ENCODE measurements at regions of chr11 and their contacts with region 1.

Region 1: GRCh38 chr11:131064373-131064991 is 148.2 kb upstream of the SNX19 start:
- DNase-seq: peak; percentile 80
- H3K4me3 ChIP-seq: peak overlapping the region in 1 of 2 experiments; percentile 19; a peak in 1 of 4 replicates
- H3K27ac ChIP-seq: no peak overlapping the region
- H3K4me1 ChIP-seq: no peaks in the 10 kb centered on the region
- H3K27me3 ChIP-seq: no peaks in the 10 kb centered on the region
- CTCF ChIP-seq: peak; percentile 53
- EP300 ChIP-seq: no peak
- RAD21 ChIP-seq: peak; percentile 88

Region 2: DNA sequence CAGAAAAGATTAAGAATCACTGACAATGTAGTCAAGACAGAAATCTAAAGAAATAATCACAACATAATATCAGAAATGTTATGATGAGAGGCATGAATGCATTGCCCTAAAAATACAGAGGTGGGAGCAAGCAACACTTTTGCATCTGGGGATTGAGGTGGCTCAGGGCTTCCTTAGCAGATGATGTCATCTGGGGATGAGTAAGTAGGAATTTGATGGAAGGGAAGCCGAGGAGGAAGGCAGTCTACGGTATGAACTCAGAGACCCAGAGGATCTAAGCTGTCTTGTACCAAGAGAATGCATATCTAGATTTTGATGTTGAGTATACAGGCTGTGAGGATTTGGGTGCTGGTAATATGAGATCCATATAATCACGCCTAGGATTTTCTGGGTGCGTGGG is 44.8 kb after region 1 on chr11:
- CTCF ChIA-PET with region 1: no interaction called
- POLR2A ChIA-PET with region 1: no interaction called
- DNase-seq: no peak
- H3K4me3 ChIP-seq: no peak overlapping the region
- H3K27ac ChIP-seq: no peak overlapping the region
- H3K4me1 ChIP-seq: no peaks in the 10 kb centered on the region
- H3K27me3 ChIP-seq: no peaks in the 10 kb centered on the region
- CTCF ChIP-seq: no peak
- EP300 ChIP-seq: no peak
- RAD21 ChIP-seq: no peak

Region 3: DNA sequence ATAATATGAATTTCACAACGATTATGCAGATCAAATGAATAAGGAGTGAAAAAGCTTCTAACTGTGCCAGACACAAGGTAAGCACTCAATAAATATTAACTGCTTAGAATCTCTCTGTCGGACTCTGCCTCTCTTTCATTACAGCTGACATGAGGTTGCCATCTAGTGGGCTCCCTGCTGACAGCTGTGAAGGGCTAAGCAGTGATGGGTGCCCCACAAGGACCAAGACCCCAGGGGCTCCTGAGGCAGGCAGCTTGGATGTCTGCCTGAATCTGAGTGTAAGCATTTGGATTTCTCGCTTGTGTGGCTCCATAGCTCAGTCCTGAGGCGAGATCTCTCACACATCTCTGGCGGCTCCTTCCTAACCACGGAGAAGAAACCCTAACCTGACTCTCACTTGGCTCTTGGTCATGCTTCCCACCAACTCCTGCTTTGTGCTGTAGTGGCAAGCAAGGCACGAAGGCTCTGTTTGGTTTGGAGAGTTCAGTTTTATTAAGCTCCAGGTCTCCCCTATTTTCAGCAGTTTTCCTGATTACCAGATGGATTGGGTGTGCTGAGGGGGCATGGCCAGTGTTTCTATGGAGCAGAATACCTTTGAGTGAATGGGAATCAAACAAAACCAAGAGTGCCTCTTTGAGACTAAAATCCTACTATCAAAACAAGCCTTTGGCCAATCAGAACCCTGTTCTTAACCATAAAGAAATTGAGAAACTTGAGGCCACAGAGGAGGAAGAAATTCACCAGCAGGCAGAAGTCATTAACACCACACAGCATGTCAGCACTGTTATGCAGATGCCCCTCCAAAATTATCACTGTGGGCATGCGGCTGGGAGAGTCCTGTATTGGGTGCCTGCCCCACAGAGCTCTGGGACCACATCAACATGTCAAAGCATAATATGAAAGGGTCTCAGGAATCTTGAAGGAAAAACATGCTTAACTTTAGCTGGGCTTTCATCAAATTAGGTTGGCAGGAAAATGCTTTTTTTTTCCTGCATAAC is 153.1 kb after region 1 on chr11:
- CTCF ChIA-PET with region 1: interaction called, 19 read pairs
- POLR2A ChIA-PET with region 1: no interaction called
- DNase-seq: no peak
- H3K4me3 ChIP-seq: no peak overlapping the region
- H3K27ac ChIP-seq: no peak overlapping the region
- H3K4me1 ChIP-seq: no peaks in the 10 kb centered on the region
- H3K27me3 ChIP-seq: no peaks in the 10 kb centered on the region
- CTCF ChIP-seq: no peak
- EP300 ChIP-seq: no peak
- RAD21 ChIP-seq: peak; percentile 56

Region 4: DNA sequence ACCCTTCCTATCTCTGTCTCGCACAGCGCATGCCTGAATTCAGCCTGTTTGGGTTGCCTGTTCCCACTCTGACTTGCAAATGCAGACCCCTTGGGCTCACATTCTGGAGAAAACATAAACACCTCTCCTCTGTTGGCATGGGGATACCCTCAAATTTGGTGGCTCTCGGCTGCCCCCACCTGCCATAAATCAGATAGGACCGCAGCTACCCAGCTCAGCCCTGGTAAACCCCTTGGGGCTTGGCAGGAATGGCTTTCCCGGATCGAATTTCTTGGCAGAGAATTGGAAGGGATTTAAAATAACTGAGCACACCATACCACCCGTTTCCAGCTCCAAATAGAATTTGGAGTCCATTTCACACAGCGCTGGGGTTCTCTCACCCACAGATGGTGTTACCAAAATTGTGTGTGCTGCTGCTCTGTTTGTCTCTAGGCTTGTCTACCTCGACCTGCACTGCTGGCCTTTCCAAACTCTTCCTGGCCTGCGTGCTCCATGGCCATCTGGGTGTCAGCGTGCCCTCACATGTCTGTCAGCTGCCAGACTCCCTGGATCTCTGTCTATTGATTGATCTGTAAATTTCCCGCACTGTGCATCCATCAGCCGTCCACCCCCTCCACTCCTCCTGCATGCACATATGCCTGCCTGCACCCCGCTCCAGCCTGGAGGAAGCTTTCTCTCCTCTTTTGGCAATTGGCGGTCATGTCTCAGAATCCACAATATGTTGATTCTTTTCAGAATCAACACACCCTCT is 439.9 kb after region 1 on chr11:
- CTCF ChIA-PET with region 1: interaction called, 44 read pairs
- POLR2A ChIA-PET with region 1: no interaction called
- DNase-seq: peak; percentile 65
- H3K4me3 ChIP-seq: no peak overlapping the region
- H3K27ac ChIP-seq: no peak overlapping the region
- H3K4me1 ChIP-seq: no peaks in the 10 kb centered on the region; a peak in 1 of 4 replicates
- H3K27me3 ChIP-seq: no peaks in the 10 kb centered on the region
- CTCF ChIP-seq: no peak
- EP300 ChIP-seq: no peak
- RAD21 ChIP-seq: peak; percentile 30

Region 5: DNA sequence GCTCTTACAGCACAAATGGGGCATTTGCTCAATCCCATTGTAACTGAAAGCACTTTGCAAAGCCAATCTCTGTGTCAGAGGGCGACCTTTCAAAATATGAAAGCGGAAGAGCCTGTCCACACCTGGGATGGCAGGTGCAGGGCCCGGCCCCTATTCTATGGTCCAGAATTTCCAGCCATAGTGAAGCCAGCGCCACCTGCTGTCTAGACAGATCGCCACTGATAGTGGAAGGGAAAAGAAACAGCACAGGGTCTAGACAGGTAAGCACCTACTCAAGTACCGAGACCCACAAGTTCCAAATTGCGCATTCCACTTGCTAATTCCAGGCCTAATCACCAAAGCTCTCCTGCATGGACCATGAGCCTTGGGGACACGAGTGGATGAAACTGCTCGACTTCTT is 447.3 kb after region 1 on chr11:
- CTCF ChIA-PET with region 1: interaction called, 44 read pairs
- POLR2A ChIA-PET with region 1: no interaction called
- DNase-seq: peak; percentile 43
- H3K4me3 ChIP-seq: peak overlapping the region in 1 of 2 experiments; percentile 54; a peak in 1 of 4 replicates
- H3K27ac ChIP-seq: no peak overlapping the region
- H3K4me1 ChIP-seq: no peaks in the 10 kb centered on the region; a peak in 1 of 4 replicates
- H3K27me3 ChIP-seq: no peaks in the 10 kb centered on the region
- CTCF ChIP-seq: no peak
- EP300 ChIP-seq: no peak
- RAD21 ChIP-seq: peak; percentile 53

Region 6: DNA sequence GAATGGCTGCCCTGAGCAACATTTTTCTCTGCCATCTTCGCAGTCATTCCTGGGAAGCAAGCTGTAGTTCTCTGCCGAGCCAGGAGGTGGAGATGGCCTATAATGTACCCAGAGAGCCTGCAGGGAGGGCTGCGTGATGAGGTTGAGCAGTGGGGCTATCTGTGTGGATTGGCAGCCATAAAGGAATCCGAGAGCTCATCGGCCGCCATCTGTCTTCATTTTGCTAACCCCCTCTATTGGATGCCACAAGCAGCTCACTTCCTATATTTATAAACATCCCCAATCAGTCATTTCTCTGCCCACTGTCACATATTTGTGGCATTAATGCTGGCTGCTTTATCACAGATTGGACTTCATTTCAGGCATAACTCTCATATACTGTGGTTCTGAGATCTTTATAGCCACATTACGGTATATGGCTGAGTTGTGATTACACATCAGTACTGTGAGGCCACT is 515.5 kb after region 1 on chr11:
- CTCF ChIA-PET with region 1: interaction called, 10 read pairs
- POLR2A ChIA-PET with region 1: no interaction called
- DNase-seq: peak; percentile 61
- H3K4me3 ChIP-seq: no peak overlapping the region
- H3K27ac ChIP-seq: no peak overlapping the region
- H3K4me1 ChIP-seq: no peaks in the 10 kb centered on the region
- H3K27me3 ChIP-seq: no peaks in the 10 kb centered on the region
- CTCF ChIP-seq: 0 out of 2 replicates have a peak, but pooled peaks have one; percentile 15
- EP300 ChIP-seq: no peak
- RAD21 ChIP-seq: peak; percentile 55

Region 7: GRCh38 chr11:131668500-131669400 is 604.3 kb after region 1 on chr11:
- CTCF ChIA-PET with region 1: interaction called, 87 read pairs
- POLR2A ChIA-PET with region 1: no interaction called
- DNase-seq: peak; percentile 60
- H3K4me3 ChIP-seq: peak overlapping the region in 1 of 2 experiments; percentile 11; a peak in 1 of 4 replicates
- H3K27ac ChIP-seq: no peak overlapping the region
- H3K4me1 ChIP-seq: no peaks in the 10 kb centered on the region
- H3K27me3 ChIP-seq: no peaks in the 10 kb centered on the region
- CTCF ChIP-seq: peak; percentile 73
- EP300 ChIP-seq: no peak
- RAD21 ChIP-seq: no peak